Activated naive CD4-positive, alpha-beta T cell treated with anti-CD3 and anti-CD28 coated beads for 36 hours (primary cell): ENCODE measurements at regions of chr10 and their contacts with region 1.

Region 1: DNA sequence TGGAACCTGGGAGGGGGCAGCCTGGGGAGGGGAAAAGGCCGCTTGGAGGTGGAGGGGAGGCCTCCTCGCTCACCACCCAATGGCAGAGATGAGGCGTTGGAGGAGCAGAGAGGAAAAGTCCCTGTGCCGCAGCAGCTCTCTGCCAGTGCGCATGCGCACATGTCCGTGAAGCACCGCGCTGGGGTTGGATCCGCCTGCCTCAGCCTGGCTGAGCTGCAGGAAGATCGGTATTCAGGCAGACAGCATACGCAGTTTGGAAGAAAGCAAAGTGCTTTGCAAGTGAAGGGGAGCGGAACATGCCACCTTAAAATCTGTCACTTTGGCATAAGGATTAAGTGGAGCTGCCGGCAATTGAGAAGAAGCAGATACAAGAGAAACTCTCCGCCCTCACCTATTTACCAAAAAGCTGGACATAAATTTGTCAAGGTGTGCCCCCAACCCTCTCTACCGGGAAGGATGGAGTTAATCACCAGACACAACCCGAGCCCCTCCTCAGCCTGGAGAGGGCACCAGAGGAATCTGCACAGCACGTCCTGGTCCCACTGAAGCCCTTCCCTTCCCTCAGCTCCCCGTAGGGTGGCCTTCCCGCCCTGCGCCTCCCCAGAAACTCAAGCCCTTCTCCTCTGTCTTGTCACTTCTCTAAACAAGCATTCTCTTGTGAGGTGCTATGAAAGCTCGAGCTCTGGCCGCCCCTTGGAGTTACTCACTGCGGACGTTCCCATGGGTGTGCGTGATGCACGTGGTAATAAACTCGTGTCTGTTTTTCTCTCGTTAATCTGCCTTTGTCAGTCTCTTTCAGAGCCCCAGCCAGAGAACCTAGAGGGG is 32.2 kb upstream of the TMEM72 start:
- DNase-seq: peak; percentile 89
- H3K4me3 Mint-ChIP-seq: peak overlapping the region; percentile 80
- H3K27ac Mint-ChIP-seq: peak overlapping the region; percentile 48
- H3K4me1 Mint-ChIP-seq: peaks cover 9% of the 10 kb centered on the region
- H3K27me3 Mint-ChIP-seq: peaks cover 2% of the 10 kb centered on the region

Region 2: GRCh38 chr10:44913350-44914081 is 34.6 kb after region 1 on chr10:
- CTCF ChIA-PET with region 1: no interaction called
- intact Hi-C with region 1: loop called (anchors 1 kb)
- DNase-seq: peak; percentile 52
- H3K4me3 Mint-ChIP-seq: peak overlapping the region; percentile 20
- H3K27ac Mint-ChIP-seq: peak overlapping the region; percentile 77
- H3K4me1 Mint-ChIP-seq: peaks cover 16% of the 10 kb centered on the region
- H3K27me3 Mint-ChIP-seq: no peaks in the 10 kb centered on the region

Region 3: GRCh38 chr10:44925224-44925623 is 46.3 kb after region 1 on chr10:
- CTCF ChIA-PET with region 1: no interaction called
- intact Hi-C with region 1: loop called (anchors 2 kb)
- DNase-seq: peak; percentile 59
- H3K4me3 Mint-ChIP-seq: no peak overlapping the region
- H3K27ac Mint-ChIP-seq: no peak overlapping the region
- H3K4me1 Mint-ChIP-seq: no peaks in the 10 kb centered on the region
- H3K27me3 Mint-ChIP-seq: no peaks in the 10 kb centered on the region

Region 4: GRCh38 chr10:44935201-44935965 is 56.5 kb after region 1 on chr10:
- CTCF ChIA-PET with region 1: no interaction called
- intact Hi-C with region 1: no loop called
- DNase-seq: no peak
- H3K4me3 Mint-ChIP-seq: no peak overlapping the region
- H3K27ac Mint-ChIP-seq: no peak overlapping the region
- H3K4me1 Mint-ChIP-seq: peaks cover 7% of the 10 kb centered on the region
- H3K27me3 Mint-ChIP-seq: peaks cover 7% of the 10 kb centered on the region